ENCODE measurements at regions of chr11 and their contacts with region 1.

Region 1: GRCh38 chr11:64916775-64917662 is at the start of gene ATG2A:
- DNase-seq: peak; percentile 99 to 100 (median 99)
- ATAC-seq: peak; percentile 98 to 99 (median 98)
- H3K4me3 ChIP-seq: peak within 1 kb of the TSS; percentile 67 to 100 (median 97)
- H3K27ac ChIP-seq: peak within 1 kb of the TSS in 11 of 12 donors; percentile 78 to 95 (median 85)
- H3K4me1 ChIP-seq: peaks cover 0 to 42% (median 26%) of the 10 kb centered on the region in 12 donors
- H3K27me3 ChIP-seq: no peaks in the 10 kb centered on the region
- CTCF ChIP-seq: no peak
- POLR2A ChIP-seq: peak; percentile 79 to 96
- total RNA-seq, gene ATG2A: 11.4 to 38.5 (median 18.4) TPM

Region 2: DNA sequence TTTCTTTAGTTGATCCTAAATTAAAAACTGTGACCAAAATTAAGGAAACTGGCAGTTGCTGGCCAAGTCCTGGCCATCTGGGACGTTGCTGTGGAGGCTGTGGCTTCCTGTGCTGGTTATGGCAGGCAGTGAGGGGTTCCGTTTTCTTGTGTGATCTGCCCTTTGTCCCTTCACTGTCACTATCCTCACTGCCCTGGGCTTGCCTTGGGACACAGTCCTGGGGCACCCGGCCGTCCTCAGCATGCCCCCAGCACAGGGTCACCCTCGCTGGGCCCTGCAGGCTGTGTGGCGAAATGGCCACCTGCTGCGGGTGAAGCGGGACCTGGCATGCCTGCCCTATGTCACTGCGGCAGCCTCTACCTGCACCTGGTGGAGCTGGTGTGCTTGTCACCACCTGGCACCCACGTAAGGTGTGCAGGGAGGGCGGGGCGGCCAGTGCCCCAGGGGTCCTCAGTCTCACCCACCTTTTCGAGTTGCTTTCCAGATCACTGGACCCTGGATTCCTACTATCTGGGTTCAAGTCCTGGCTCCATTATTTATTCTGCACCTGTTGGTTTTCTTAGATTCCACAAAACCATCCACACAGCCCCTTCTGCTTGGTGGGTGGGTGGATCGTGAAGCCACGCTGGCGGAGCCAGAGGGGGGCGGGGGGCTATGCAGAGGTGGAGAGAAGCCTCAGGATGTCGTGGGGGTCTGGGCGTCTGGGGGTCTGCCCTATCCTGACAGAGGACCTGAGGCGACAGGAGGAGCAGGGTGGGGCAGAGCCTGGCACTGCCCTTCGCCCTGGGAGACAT is 378.3 kb before region 1 on chr11:
- intact Hi-C with region 1: no loop called
- DNase-seq: no peak
- ATAC-seq: peak in 1 of 4 donors; percentile 41
- H3K4me3 ChIP-seq: no peak overlapping the region
- H3K27ac ChIP-seq: no peak overlapping the region
- H3K4me1 ChIP-seq: peaks cover 0 to 12% (median 0%) of the 10 kb centered on the region in 12 donors
- H3K27me3 ChIP-seq: peaks cover 0 to 15% (median 3%) of the 10 kb centered on the region in 9 donors
- CTCF ChIP-seq: no peak
- POLR2A ChIP-seq: no peak

Region 3: DNA sequence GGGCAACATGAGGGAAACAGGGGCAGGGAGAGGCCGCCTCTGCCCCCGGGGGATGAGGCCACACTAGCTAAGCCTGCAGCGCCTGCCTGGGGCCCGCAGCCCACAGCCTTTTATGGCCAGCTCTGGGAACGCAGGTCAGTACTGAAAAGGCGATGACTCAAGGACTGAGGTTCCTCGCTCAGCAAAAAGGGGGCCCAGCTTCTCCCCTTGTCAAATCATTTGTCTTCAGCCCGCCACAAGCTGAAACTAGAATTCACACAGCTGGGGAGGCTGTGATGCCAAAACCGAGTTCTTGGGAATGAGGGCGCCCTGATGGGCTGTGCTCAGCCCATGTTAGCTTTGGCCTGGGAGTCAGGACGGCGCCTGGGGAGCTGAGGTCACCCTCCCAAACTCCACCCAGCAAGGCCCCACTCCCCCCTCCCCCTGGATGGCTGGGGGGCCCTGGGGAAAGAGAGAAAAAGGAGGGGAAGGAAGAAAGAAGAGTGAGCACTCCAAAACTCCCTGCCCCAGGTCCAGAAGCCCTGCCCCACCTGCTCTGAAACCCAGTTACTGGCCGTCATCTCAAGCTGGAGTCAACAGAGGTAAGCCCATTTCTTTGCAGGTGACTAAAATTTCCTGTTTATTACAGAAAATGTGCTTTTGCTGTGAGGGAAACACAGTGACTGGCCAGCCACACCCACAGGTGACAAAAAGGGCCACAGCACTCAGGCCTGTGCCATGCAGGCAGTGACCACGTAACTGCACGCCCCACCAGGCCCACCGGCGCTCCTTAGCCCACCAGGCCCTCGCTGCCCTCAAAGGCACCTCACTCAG is 52.3 kb before region 1 on chr11:
- intact Hi-C with region 1: no loop called
- DNase-seq: peak; percentile 76 to 88 (median 86)
- ATAC-seq: peak; percentile 66 to 81 (median 74)
- H3K4me3 ChIP-seq: peak overlapping the region in 8 of 12 donors; percentile 10 to 40 (median 23)
- H3K27ac ChIP-seq: peak overlapping the region; percentile 77 to 99 (median 92)
- H3K4me1 ChIP-seq: peaks cover 45 to 99% (median 79%) of the 10 kb centered on the region in 12 donors
- H3K27me3 ChIP-seq: no peaks in the 10 kb centered on the region
- CTCF ChIP-seq: peak in 1 of 12 donors; percentile 7
- POLR2A ChIP-seq: no peak

Region 4: DNA sequence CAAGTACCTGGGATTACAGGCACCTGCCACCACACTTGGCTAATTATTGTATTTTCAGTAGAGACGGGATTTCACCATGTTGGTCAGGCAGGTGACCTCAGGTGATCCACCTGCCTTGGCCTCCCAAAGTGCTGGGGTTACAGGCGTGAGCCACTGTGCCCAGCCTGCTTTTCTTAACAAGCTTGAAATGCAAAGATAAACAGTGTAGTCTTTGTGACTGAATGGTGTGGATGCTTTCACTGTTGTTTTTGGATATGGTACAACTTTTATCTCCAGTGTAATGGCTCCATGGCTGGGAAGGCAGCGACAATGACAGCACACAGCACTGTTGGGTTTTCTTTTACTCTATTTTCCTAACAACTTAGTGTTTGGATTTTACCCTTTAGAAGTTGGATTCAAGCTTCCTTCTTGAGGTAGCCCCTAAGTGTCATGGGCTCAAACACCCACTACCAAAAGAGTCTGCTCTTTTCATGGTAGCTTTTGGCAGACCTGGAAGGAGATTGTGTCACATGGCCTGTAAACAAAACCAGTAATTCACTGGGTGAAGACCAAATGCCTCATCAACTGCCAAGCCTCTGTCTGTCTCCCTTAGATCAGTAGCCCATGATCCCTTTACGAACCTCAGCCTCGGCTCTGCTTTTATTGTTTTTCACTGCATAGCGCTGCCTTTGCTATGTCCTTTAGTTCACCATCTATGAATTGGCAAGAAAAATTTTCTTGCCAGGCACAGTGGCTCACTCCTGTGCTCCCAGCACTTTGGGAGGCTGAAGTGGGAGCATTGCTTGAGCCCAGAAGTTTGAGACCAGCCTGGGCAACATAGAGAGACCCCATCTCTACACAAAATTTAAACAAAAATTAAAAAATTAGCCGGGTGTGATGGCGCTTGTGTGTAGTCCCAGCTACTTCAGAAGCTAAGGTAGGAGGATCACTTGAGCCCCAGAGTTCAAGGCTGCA is 185.4 kb after region 1 on chr11:
- intact Hi-C with region 1: loop called in 1 of 10 experiments (anchors 10 kb)
- DNase-seq: peak in 1 of 5 donors; percentile 21
- ATAC-seq: peak; percentile 62 to 75 (median 69)
- H3K4me3 ChIP-seq: peak overlapping the region in 1 of 12 donors; percentile 2
- H3K27ac ChIP-seq: peak overlapping the region; percentile 48 to 87 (median 76)
- H3K4me1 ChIP-seq: peaks cover 0 to 57% (median 36%) of the 10 kb centered on the region in 12 donors
- H3K27me3 ChIP-seq: no peaks in the 10 kb centered on the region
- CTCF ChIP-seq: no peak
- POLR2A ChIP-seq: no peak

Measured in heart left ventricle (tissue), 16 donors.